ENCODE measurements at regions of chr10 and their contacts with region 1.

Region 1: GRCh38 chr10:15209827-15210509 is 41.5 kb upstream of the NMT2 start:
- DNase-seq: peak; percentile 58 to 92 (median 76)
- ATAC-seq: peak; percentile 53 to 74
- H3K4me3 Mint-ChIP-seq: peak overlapping the region; percentile 28 to 75 (median 62)
- H3K27ac Mint-ChIP-seq: peak overlapping the region; percentile 79 to 97 (median 88)
- H3K4me1 Mint-ChIP-seq: peaks cover 16 to 64% (median 56%) of the 10 kb centered on the region in 4 donors
- H3K27me3 Mint-ChIP-seq: no peaks in the 10 kb centered on the region

Region 2: GRCh38 chr10:15182540-15183207 is 27.3 kb before region 1 on chr10:
- POLR2A ChIA-PET with region 1: interaction called, 11 read pairs
- DNase-seq: no peak
- ATAC-seq: no peak
- H3K4me3 Mint-ChIP-seq: no peak overlapping the region
- H3K27ac Mint-ChIP-seq: peak overlapping the region in 5 of 10 donors; percentile 4 to 76 (median 17)
- H3K4me1 Mint-ChIP-seq: peaks cover 22 to 48% (median 33%) of the 10 kb centered on the region in 4 donors
- H3K27me3 Mint-ChIP-seq: no peaks in the 10 kb centered on the region